GM10248 (cell line): ENCODE measurements at regions of chr14 and their contacts with region 1.

Region 1: GRCh38 chr14:71551291-71551950 is 380.8 kb upstream of the RGS6 start:
- DNase-seq: no peak
- CTCF ChIP-seq: no peak

Region 2: DNA sequence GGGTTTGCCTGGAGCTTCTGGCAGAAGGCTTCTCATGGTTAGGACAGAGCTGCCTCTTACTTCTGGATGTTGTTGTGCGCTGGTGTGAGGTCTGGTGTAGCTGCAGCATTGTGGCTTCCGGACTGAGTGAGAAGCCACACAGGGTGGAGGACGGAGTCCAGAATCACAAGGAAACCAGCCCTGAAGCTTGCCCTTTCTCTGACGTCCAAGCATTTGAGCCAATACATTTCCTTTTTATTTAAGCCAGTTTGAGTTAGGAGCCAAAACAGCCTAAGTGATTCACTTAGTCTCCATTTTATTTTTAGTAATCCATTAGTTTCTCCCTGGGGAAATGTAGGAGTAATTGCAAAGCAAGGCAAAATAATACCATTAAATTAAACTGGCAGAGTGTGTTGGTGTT is 21.6 kb before region 1 on chr14:
- CTCF ChIA-PET with region 1: interaction called, 11 read pairs
- POLR2A ChIA-PET with region 1: no interaction called
- DNase-seq: no peak
- CTCF ChIP-seq: no peak

Region 3: GRCh38 chr14:71539650-71540285 is 11.7 kb before region 1 on chr14:
- CTCF ChIA-PET with region 1: interaction called, 38 read pairs
- POLR2A ChIA-PET with region 1: interaction called, 5 read pairs
- DNase-seq: no peak
- CTCF ChIP-seq: no peak

Region 4: GRCh38 chr14:71586131-71586897 is 34.9 kb after region 1 on chr14:
- CTCF ChIA-PET with region 1: no interaction called
- POLR2A ChIA-PET with region 1: no interaction called
- DNase-seq: no peak
- CTCF ChIP-seq: no peak

Region 5: DNA sequence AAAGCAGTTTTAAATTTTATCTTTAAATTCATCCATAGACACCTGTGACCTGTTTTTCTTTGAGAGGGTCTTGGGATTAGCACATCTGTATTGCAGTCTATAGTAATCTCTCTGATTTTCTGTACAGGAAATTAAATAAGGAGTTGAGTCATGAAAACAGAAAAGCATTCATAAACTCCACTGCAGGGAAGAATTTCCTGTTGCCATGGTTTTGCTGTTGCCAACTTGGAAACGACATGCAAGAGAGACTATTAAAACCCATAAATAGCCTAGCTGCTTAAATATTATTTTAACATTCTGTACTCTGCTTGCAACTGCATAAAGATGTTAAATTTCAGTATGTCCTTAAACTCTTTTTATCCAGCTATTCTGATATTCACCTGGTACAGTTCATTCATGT is 99.8 kb after region 1 on chr14:
- CTCF ChIA-PET with region 1: no interaction called
- POLR2A ChIA-PET with region 1: no interaction called
- DNase-seq: no peak
- CTCF ChIP-seq: no peak

Region 6: DNA sequence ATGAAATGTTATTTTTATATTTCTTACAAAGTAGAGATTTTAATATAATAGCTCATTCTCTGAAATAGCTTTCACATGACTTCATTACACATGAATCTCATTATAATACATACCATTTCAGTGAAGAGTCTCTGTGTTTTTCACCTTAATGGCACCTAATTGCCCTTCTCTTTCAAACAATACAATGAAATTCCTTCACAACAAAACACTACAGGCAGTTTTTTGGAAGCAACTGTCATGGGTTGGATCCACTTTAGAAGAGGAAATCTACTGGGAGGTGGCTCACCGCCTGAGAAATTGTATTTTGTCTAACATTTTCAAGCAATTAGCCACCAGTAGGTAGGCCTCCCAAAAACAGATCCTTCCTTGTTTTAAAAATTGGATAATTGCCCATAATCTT is 340.5 kb after region 1 on chr14:
- CTCF ChIA-PET with region 1: no interaction called
- POLR2A ChIA-PET with region 1: no interaction called
- DNase-seq: no peak
- CTCF ChIP-seq: no peak